Ovary (tissue), 10 donors: ENCODE measurements at regions of chr5 and their contacts with region 1.

Region 1: GRCh38 chr5:177113566-177114424 is 19.8 kb upstream of the NSD1 start:
- DNase-seq: peak; percentile 60 to 88 (median 83)
- H3K4me3 ChIP-seq: no peak overlapping the region
- H3K27ac ChIP-seq: no peak overlapping the region
- H3K4me1 ChIP-seq: peaks cover 18% of the 10 kb centered on the region
- H3K27me3 ChIP-seq: no peaks in the 10 kb centered on the region
- CTCF ChIP-seq: peak; percentile 88 to 94 (median 90)
- EP300 ChIP-seq: no peak
- POLR2A ChIP-seq: no peak

Region 2: GRCh38 chr5:176660860-176661641 is 452.7 kb before region 1 on chr5:
- intact Hi-C with region 1: loop called in 2 of 4 experiments (anchors 5 kb)
- DNase-seq: peak; percentile 63 to 84 (median 78)
- H3K4me3 ChIP-seq: no peak overlapping the region
- H3K27ac ChIP-seq: no peak overlapping the region
- H3K4me1 ChIP-seq: peaks cover 9% of the 10 kb centered on the region
- H3K27me3 ChIP-seq: no peaks in the 10 kb centered on the region
- CTCF ChIP-seq: peak; percentile 75 to 94 (median 77)
- EP300 ChIP-seq: no peak
- POLR2A ChIP-seq: no peak

Region 3: GRCh38 chr5:176916337-176916736 is 197.5 kb before region 1 on chr5:
- intact Hi-C with region 1: no loop called
- DNase-seq: no peak
- H3K4me3 ChIP-seq: no peak overlapping the region
- H3K27ac ChIP-seq: no peak overlapping the region
- H3K4me1 ChIP-seq: peaks cover 2% of the 10 kb centered on the region
- H3K27me3 ChIP-seq: no peaks in the 10 kb centered on the region
- CTCF ChIP-seq: no peak
- EP300 ChIP-seq: no peak
- POLR2A ChIP-seq: no peak

Region 4: DNA sequence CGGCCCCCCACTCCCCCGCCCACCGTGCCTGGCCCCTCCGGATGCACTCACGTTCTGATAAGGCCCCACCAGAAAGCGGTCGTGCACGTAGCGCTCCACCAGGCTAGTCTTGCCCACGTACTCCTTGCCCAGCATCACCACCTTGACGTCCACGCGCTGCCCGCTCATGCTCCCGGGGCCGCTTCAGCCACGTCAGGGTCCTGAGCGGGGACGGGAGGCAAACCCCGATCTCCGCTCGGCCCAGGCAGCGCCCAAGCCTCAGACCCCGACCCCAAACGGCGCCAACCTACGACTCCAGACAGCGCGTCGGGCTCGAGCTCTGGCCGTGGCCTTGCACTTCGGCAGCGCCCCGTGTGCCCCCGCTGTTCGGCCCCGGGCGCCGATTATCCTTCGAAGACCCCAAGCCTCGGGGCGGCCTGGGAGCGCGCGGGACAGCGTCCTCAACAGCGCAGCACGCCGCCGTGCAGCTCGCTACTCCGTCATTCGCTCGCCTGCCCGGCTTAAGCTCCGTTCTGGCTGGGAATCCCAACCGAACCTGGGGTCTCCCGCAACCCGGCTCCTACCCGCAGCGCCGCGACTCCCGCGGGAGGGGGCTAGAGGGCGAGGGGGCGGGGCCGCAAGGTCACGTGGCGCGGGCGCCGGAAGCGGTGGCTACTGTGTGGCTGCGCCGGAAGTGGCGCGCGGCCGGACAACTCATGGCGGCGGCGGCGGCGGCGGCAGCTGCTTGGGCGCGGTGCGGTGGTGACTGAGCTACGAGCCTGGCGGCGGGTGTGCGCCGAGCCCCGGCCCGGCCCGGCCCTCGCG is 189.5 kb after region 1 on chr5 and contains the starts of genes PRELID1 and RAB24:
- intact Hi-C with region 1: loop called in 3 of 4 experiments (anchors 10 kb)
- DNase-seq: peak; percentile 80 to 93 (median 88)
- H3K4me3 ChIP-seq: peak within 1 kb of the TSS; percentile 90
- H3K27ac ChIP-seq: peak within 1 kb of the TSS; percentile 60 to 64
- H3K4me1 ChIP-seq: peaks cover 16% of the 10 kb centered on the region
- H3K27me3 ChIP-seq: no peaks in the 10 kb centered on the region
- CTCF ChIP-seq: peak in 1 of 3 donors; percentile 44
- EP300 ChIP-seq: no peak
- POLR2A ChIP-seq: peak; percentile 29
- total RNA-seq, gene PRELID1: 42.8 to 96.8 (median 74.6) TPM
- total RNA-seq, gene RAB24: 23.3 to 40.4 (median 26.8) TPM

Region 5: DNA sequence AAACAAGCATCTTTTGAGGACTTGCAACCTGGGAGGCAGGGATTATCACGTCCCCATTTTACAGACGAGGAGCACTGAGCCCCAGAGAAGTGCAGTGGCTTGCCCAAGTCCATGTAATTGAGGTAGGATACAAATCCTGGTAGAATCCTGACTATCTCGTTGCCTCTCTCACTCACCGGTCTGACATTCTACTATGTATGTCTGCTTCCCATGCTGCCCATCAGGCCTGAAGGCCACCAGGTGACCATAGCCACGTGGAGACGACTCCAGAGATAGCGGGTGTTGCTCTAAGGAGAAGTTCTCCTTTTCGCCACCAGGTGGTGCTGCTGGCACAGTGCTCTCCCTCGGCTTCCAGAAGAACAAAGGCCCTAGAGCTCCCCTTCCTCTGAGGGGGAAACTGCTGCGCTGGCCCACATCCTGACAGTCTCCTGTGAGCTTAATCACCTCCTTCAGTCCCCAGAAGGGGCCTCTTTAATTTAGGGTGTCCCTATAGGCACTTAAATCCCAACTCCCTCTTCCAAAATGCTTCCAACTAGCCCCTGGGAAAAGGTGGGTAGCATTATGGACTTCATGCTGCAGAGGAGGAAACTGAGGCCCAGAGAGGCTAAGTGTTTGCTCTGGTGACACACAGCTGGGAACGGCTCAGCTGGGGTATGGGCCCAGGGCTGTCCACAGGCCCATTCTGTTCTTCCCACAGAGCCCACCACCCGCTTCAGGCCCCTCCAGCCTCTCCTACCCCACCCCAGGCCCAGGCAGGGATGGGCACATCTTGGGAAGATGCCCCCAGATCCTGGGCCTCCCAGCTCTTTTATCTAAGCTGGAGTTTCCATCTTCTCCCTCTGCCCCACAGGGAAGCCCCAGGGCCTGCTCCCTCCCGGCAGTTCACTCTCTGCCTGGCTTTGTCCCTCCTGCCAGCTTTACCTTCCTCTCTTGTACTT is 276.8 kb after region 1 on chr5:
- intact Hi-C with region 1: loop called in 1 of 4 experiments (anchors 10 kb)
- DNase-seq: peak; percentile 69 to 84 (median 81)
- H3K4me3 ChIP-seq: no peak overlapping the region
- H3K27ac ChIP-seq: no peak overlapping the region
- H3K4me1 ChIP-seq: no peaks in the 10 kb centered on the region
- H3K27me3 ChIP-seq: no peaks in the 10 kb centered on the region
- CTCF ChIP-seq: peak; percentile 93 to 97 (median 95)
- EP300 ChIP-seq: no peak
- POLR2A ChIP-seq: no peak

Region 6: GRCh38 chr5:177497292-177498033 is 383.7 kb after region 1 on chr5 and contains the start of gene PDLIM7:
- intact Hi-C with region 1: loop called in 1 of 4 experiments (anchors 10 kb)
- DNase-seq: peak; percentile 94 to 98 (median 97)
- H3K4me3 ChIP-seq: peak within 1 kb of the TSS; percentile 63
- H3K27ac ChIP-seq: peak within 1 kb of the TSS; percentile 62 to 65
- H3K4me1 ChIP-seq: peaks cover 13% of the 10 kb centered on the region
- H3K27me3 ChIP-seq: no peaks in the 10 kb centered on the region
- CTCF ChIP-seq: peak in 1 of 3 donors; percentile 14
- EP300 ChIP-seq: no peak
- POLR2A ChIP-seq: peak; percentile 90
- total RNA-seq, gene PDLIM7: 32.7 to 243 (median 151) TPM